ENCODE measurements at regions of chr11 and their contacts with region 1.

Region 1: GRCh38 chr11:74449369-74449931 is 17.9 kb downstream of the KCNE3 start:
- DNase-seq: peak; percentile 56
- H3K4me3 ChIP-seq: no peak overlapping the region; a peak in 1 of 4 replicates
- H3K27ac ChIP-seq: no peak overlapping the region
- H3K4me1 ChIP-seq: peaks cover 0 to 17% of the 10 kb centered on the region in 2 experiments; a peak in 3 of 4 replicates
- H3K27me3 ChIP-seq: no peaks in the 10 kb centered on the region
- CTCF ChIP-seq: peak; percentile 77
- EP300 ChIP-seq: no peak
- RAD21 ChIP-seq: peak; percentile 98

Region 2: GRCh38 chr11:74090701-74091100 is 358.7 kb before region 1 on chr11:
- CTCF ChIA-PET with region 1: no interaction called
- POLR2A ChIA-PET with region 1: no interaction called
- DNase-seq: no peak
- H3K4me3 ChIP-seq: no peak overlapping the region
- H3K27ac ChIP-seq: no peak overlapping the region
- H3K4me1 ChIP-seq: no peaks in the 10 kb centered on the region; a peak in 1 of 4 replicates
- H3K27me3 ChIP-seq: no peaks in the 10 kb centered on the region
- CTCF ChIP-seq: no peak
- EP300 ChIP-seq: no peak
- RAD21 ChIP-seq: peak; percentile 20; the same call in 1 of the 2 replicates

Region 3: DNA sequence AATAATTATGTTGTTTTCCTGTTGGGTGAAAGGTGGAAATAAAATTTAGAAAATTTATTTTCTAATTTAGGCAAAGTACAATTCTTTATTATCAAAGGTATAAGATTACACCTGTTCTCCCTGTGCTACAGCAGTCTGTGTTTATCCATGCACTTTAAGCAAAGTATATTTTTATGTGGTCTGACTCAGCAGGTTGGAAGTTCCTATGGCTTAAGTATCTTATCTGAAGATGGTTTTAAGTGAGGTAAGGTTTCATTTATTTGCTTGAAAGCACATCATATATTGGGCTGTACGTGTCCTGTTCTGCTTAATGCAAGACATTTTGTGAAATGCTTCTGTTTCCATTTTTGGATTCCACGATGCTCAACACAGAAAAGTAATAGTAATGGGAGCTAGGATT is 263.8 kb before region 1 on chr11:
- CTCF ChIA-PET with region 1: no interaction called
- POLR2A ChIA-PET with region 1: no interaction called
- DNase-seq: no peak
- H3K4me3 ChIP-seq: no peak overlapping the region
- H3K27ac ChIP-seq: no peak overlapping the region
- H3K4me1 ChIP-seq: no peaks in the 10 kb centered on the region
- H3K27me3 ChIP-seq: no peaks in the 10 kb centered on the region
- CTCF ChIP-seq: no peak
- EP300 ChIP-seq: no peak
- RAD21 ChIP-seq: no peak

Region 4: GRCh38 chr11:74255741-74256369 is 193.6 kb before region 1 on chr11:
- CTCF ChIA-PET with region 1: interaction called, 218 read pairs
- POLR2A ChIA-PET with region 1: interaction called, 4 read pairs
- DNase-seq: peak; percentile 73
- H3K4me3 ChIP-seq: no peak overlapping the region; a peak in 1 of 4 replicates
- H3K27ac ChIP-seq: no peak overlapping the region
- H3K4me1 ChIP-seq: peaks cover 0 to 10% of the 10 kb centered on the region in 2 experiments; a peak in 1 of 4 replicates
- H3K27me3 ChIP-seq: no peaks in the 10 kb centered on the region
- CTCF ChIP-seq: peak; percentile 97
- EP300 ChIP-seq: no peak
- RAD21 ChIP-seq: peak; percentile 90

Region 5: GRCh38 chr11:74418509-74418895 is 30.9 kb before region 1 on chr11:
- CTCF ChIA-PET with region 1: interaction called, 11 read pairs
- POLR2A ChIA-PET with region 1: no interaction called
- DNase-seq: no peak
- H3K4me3 ChIP-seq: no peak overlapping the region
- H3K27ac ChIP-seq: peak overlapping the region in 1 of 2 experiments; percentile 93; a peak in 2 of 4 replicates
- H3K4me1 ChIP-seq: peaks cover 0 to 18% of the 10 kb centered on the region in 2 experiments; a peak in 3 of 4 replicates
- H3K27me3 ChIP-seq: no peaks in the 10 kb centered on the region
- CTCF ChIP-seq: no peak
- EP300 ChIP-seq: 0 out of 4 replicates have a peak, but pooled peaks of 1 of the 2 experiments have one; percentile 18
- RAD21 ChIP-seq: no peak

Region 6: GRCh38 chr11:74470526-74470925 is 21.1 kb after region 1 on chr11:
- CTCF ChIA-PET with region 1: interaction called, 11 read pairs
- POLR2A ChIA-PET with region 1: no interaction called
- DNase-seq: no peak
- H3K4me3 ChIP-seq: no peak overlapping the region
- H3K27ac ChIP-seq: no peak overlapping the region
- H3K4me1 ChIP-seq: peaks cover 0 to 2% of the 10 kb centered on the region in 2 experiments; a peak in 2 of 4 replicates
- H3K27me3 ChIP-seq: peaks cover under 1% of the 10 kb centered on the region; the same call in 1 of the 2 replicates
- CTCF ChIP-seq: no peak
- EP300 ChIP-seq: no peak
- RAD21 ChIP-seq: no peak

Region 7: GRCh38 chr11:74570266-74571061 is 121.0 kb after region 1 on chr11:
- CTCF ChIA-PET with region 1: interaction called, 349 read pairs
- POLR2A ChIA-PET with region 1: interaction called, 4 read pairs
- DNase-seq: peak; percentile 70
- H3K4me3 ChIP-seq: no peak overlapping the region; a peak in 1 of 4 replicates
- H3K27ac ChIP-seq: no peak overlapping the region
- H3K4me1 ChIP-seq: no peaks in the 10 kb centered on the region
- H3K27me3 ChIP-seq: no peaks in the 10 kb centered on the region; the same call in 1 of the 2 replicates
- CTCF ChIP-seq: peak; percentile 74
- EP300 ChIP-seq: no peak
- RAD21 ChIP-seq: peak; percentile 93